ENCODE measurements at regions of chr2 and their contacts with region 1.

Region 1: DNA sequence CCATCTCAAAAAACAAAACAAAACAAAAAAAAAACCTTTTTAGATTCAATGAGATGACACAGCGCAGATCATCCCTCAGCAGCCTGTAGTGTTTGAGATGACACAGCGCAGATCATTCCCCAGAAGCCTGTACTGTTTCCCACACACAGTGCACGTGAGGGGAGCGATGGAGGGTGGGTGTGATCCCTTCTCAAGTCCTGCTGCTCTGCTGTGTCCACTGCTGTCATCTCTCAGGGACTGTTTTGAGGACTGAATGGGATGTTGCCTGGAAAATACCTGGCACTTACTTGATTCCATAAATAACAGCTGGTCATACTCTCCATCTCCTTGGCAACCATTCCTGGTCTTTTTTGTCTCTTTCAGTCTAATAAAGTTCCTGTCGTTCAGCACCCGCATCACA is 25.7 kb downstream of the TGOLN2 start:
- DNase-seq: no peak
- H3K4me3 ChIP-seq: no peak overlapping the region
- CTCF ChIP-seq: no peak

Region 2: GRCh38 chr2:85011747-85012146 is 290.4 kb before region 1 on chr2:
- CTCF ChIA-PET with region 1: interaction called, 10 read pairs
- POLR2A ChIA-PET with region 1: no interaction called
- DNase-seq: no peak
- H3K4me3 ChIP-seq: no peak overlapping the region
- CTCF ChIP-seq: no peak

Region 3: DNA sequence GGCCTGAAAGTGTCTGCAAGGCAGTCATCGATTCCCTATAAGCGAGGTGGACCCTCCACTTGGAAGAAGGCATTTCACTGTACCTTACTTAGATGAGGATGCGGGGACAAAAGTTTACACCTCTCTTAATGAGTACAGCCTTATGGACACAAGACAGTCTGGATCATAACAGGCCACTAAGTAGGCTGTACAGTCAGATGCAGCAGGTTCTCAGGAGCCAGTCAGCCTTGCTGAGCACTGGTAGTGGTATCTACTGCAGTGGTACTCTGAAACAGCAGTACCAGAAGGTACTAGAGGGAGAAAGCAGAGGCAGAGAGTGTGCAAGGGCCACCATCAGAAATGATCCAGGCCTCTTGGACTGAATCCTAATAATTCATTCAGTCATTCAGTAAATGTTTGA is 253.6 kb before region 1 on chr2:
- CTCF ChIA-PET with region 1: interaction called, 20 read pairs
- POLR2A ChIA-PET with region 1: no interaction called
- DNase-seq: no peak
- H3K4me3 ChIP-seq: no peak overlapping the region
- CTCF ChIP-seq: no peak

Region 4: GRCh38 chr2:85076618-85077274 is 225.4 kb before region 1 on chr2:
- CTCF ChIA-PET with region 1: interaction called, 15 read pairs
- POLR2A ChIA-PET with region 1: no interaction called
- DNase-seq: no peak
- H3K4me3 ChIP-seq: no peak overlapping the region
- CTCF ChIP-seq: no peak

Region 5: DNA sequence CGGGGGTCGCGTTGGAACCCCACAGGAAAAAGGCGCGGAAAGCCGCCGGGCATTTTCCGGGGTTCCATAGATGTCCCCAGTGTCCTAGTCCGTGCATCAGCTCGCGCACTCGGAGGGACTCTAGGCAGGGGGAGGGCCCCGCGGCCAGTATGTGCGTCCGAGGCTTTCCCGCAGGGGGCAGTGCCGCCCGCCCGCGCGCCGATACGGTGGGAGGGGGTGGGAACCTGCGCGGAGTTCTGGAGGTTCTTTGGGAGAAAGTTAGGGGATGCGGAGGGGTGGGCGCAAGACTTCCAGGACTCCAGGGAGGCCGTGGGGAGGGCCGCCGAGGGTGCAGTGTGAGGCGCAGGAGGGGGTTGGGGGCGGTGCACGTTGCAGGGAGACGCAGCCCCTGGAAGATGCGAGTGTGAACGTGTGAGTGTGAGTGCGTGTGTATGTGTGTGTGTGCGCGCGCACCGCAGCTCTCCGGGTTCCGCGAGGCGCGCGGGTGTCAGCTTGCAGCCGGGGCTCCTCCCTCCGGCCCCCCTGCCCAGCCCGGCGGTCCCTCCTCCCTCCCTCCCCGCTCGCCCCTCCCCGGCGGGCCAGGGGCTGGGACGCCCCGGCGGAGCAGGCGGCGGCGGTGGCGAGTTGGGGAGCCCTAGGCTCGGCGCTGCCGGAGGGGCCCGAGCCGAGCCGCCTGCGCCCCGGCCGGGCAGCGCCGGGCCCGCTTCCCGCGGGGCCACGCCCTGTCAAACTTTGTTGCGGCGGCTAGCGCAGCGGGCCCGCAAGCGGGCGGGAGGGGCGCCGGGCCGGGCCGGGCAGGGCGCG is 169.1 kb before region 1 on chr2 and contains the start of gene TCF7L1:
- CTCF ChIA-PET with region 1: interaction called, 115 read pairs
- POLR2A ChIA-PET with region 1: no interaction called
- DNase-seq: no peak
- H3K4me3 ChIP-seq: peak within 1 kb of the TSS; percentile 86
- CTCF ChIP-seq: peak; percentile 98

Region 6: DNA sequence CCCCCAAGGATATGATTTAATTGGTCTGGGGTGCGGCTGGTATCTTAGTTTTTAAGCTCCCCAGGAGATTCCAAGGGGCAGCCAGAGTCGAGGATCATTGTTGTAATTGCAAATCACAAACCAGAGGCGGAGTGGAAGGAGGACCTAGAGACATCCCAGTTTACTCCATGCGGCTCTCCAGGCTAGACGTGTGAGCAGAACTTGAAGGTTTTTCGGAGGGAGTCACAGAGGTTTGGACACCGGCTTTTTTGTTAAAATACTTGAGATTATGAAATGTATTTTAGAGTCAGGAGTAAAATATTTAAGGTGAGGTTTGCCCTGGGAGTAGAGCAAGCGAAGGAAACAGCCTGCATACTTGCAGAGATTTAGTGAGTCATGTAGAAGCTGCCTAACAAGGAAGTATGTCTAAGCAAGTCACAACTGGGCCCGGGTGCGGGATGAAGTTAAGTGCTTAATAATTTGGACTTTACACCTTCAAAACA is 13.8 kb before region 1 on chr2:
- CTCF ChIA-PET with region 1: interaction called, 179 read pairs
- POLR2A ChIA-PET with region 1: no interaction called
- DNase-seq: peak; percentile 50
- H3K4me3 ChIP-seq: no peak overlapping the region
- CTCF ChIP-seq: no peak

Region 7: GRCh38 chr2:85327822-85328617 is 25.9 kb after region 1 on chr2 and contains the start of gene TGOLN2:
- CTCF ChIA-PET with region 1: interaction called, 10 read pairs
- POLR2A ChIA-PET with region 1: interaction called, 3 read pairs
- DNase-seq: no peak
- H3K4me3 ChIP-seq: peak within 1 kb of the TSS; percentile 87
- CTCF ChIP-seq: no peak